K562 (cell line): ENCODE measurements at regions of chr4 and their contacts with region 1.

Region 1: GRCh38 chr4:74623041-74623440 is 171.3 kb downstream of the BTC start:
- DNase-seq: peak; percentile 53 to 77 (median 59)
- ATAC-seq: peak; percentile 95
- H3K4me3 ChIP-seq: no peak overlapping the region
- H3K27ac ChIP-seq: no peak overlapping the region
- H3K4me1 ChIP-seq: peaks cover 0 to 8% of the 10 kb centered on the region in 2 experiments; a peak in 2 of 5 replicates
- H3K27me3 ChIP-seq: no peaks in the 10 kb centered on the region
- CTCF ChIP-seq: peak; percentile 73 to 79 (median 76)
- EP300 ChIP-seq: no peak
- POLR2A ChIP-seq: no peak
- RAD21 ChIP-seq: peak; percentile 88 to 90

Region 2: GRCh38 chr4:74189331-74190043 is 433.6 kb before region 1 on chr4:
- CTCF ChIA-PET with region 1: no interaction called
- POLR2A ChIA-PET with region 1: no interaction called
- in situ Hi-C with region 1: no loop called
- intact Hi-C with region 1: loop called (anchors 1 kb)
- DNase-seq: peak; percentile 33 to 70 (median 42)
- ATAC-seq: peak; percentile 67
- H3K4me3 ChIP-seq: no peak overlapping the region
- H3K27ac ChIP-seq: no peak overlapping the region
- H3K4me1 ChIP-seq: no peaks in the 10 kb centered on the region
- H3K27me3 ChIP-seq: no peaks in the 10 kb centered on the region
- CTCF ChIP-seq: peak; percentile 46 to 75 (median 55); a peak in 5 of 6 replicates
- EP300 ChIP-seq: no peak
- POLR2A ChIP-seq: no peak
- RAD21 ChIP-seq: peak; percentile 67 to 69

Region 3: DNA sequence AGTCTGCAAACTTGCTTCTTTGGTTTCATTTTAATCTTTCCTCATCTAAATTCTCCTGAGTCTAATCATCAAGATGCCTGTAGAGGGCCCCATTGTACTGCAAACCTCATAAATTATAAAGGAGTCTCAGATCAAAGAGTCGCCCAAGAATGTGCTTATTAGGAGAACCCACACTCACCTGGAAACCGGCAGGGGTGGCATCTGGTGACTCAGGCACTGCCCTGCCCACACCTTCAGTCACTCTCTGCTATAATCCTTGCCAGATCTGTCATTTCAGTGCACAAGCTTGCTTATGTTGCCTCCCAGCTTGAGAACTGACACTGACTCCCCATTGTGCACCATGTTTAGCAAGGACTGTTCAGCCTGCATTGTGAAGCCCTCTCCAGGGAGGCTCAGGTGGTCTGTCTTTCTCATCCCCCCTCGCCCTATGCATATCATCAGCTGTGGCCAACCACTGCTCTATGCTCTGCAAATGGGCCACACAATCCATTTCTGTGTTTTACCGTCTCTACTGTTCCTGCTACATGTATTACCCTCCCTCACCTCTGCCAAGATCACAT is 302.4 kb before region 1 on chr4:
- CTCF ChIA-PET with region 1: interaction called, 6 read pairs
- POLR2A ChIA-PET with region 1: no interaction called
- in situ Hi-C with region 1: no loop called
- intact Hi-C with region 1: loop called (anchors 1 kb)
- DNase-seq: peak; percentile 17 to 77 (median 40)
- ATAC-seq: peak; percentile 73
- H3K4me3 ChIP-seq: no peak overlapping the region
- H3K27ac ChIP-seq: peak overlapping the region; percentile 2; the same call in 1 of the 3 replicates
- H3K4me1 ChIP-seq: peaks cover 5 to 30% of the 10 kb centered on the region in 2 experiments
- H3K27me3 ChIP-seq: no peaks in the 10 kb centered on the region
- CTCF ChIP-seq: peak; percentile 65 to 78 (median 68); a peak in 5 of 6 replicates
- EP300 ChIP-seq: no peak
- POLR2A ChIP-seq: no peak
- RAD21 ChIP-seq: peak; percentile 78 to 84

Region 4: GRCh38 chr4:74431113-74431826 is 191.8 kb before region 1 on chr4:
- CTCF ChIA-PET with region 1: no interaction called
- POLR2A ChIA-PET with region 1: no interaction called
- in situ Hi-C with region 1: no loop called
- intact Hi-C with region 1: loop called (anchors 5 kb)
- DNase-seq: peak in 1 of 4 experiments; percentile 28
- ATAC-seq: peak; percentile 43; the same call in 2 of the 3 replicates
- H3K4me3 ChIP-seq: no peak overlapping the region
- H3K27ac ChIP-seq: no peak overlapping the region
- H3K4me1 ChIP-seq: peaks cover 0 to 3% of the 10 kb centered on the region in 2 experiments; a peak in 2 of 5 replicates
- H3K27me3 ChIP-seq: no peaks in the 10 kb centered on the region
- CTCF ChIP-seq: no peak
- EP300 ChIP-seq: no peak
- POLR2A ChIP-seq: no peak
- RAD21 ChIP-seq: no peak

Region 5: GRCh38 chr4:74640111-74640903 is 17.3 kb after region 1 on chr4:
- CTCF ChIA-PET with region 1: no interaction called
- POLR2A ChIA-PET with region 1: no interaction called
- in situ Hi-C with region 1: no loop called
- intact Hi-C with region 1: no loop called
- DNase-seq: no peak
- ATAC-seq: no peak; the same call in 2 of the 3 replicates
- H3K4me3 ChIP-seq: no peak overlapping the region
- H3K27ac ChIP-seq: no peak overlapping the region
- H3K4me1 ChIP-seq: peaks cover 0 to 6% of the 10 kb centered on the region in 2 experiments; a peak in 2 of 5 replicates
- H3K27me3 ChIP-seq: no peaks in the 10 kb centered on the region
- CTCF ChIP-seq: no peak
- EP300 ChIP-seq: no peak
- POLR2A ChIP-seq: no peak
- RAD21 ChIP-seq: no peak